T-cell (primary cell): ENCODE measurements at regions of chr19 and their contacts with region 1.

Region 1: GRCh38 chr19:10403137-10404021 is at the start of gene CDC37:
- DNase-seq: peak; percentile 92 to 99 (median 97)
- ATAC-seq: peak; percentile 81 to 84 (median 84)
- H3K4me3 ChIP-seq: peak within 1 kb of the TSS; percentile 82 to 91
- H3K4me3 Mint-ChIP-seq: peak within 1 kb of the TSS; percentile 89 to 95 (median 94)
- H3K27ac ChIP-seq: peak within 1 kb of the TSS; percentile 89
- H3K27ac Mint-ChIP-seq: peak within 1 kb of the TSS; percentile 78 to 92
- H3K4me1 ChIP-seq: peaks cover 33 to 84% of the 10 kb centered on the region in 2 experiments
- H3K4me1 Mint-ChIP-seq: peaks cover 63 to 75% (median 69%) of the 10 kb centered on the region in 3 donors
- H3K27me3 ChIP-seq: peaks cover 0 to 16% of the 10 kb centered on the region in 2 experiments
- H3K27me3 Mint-ChIP-seq: no peaks in the 10 kb centered on the region
- total RNA-seq, gene CDC37: 163 to 205 (median 190) TPM

Region 2: DNA sequence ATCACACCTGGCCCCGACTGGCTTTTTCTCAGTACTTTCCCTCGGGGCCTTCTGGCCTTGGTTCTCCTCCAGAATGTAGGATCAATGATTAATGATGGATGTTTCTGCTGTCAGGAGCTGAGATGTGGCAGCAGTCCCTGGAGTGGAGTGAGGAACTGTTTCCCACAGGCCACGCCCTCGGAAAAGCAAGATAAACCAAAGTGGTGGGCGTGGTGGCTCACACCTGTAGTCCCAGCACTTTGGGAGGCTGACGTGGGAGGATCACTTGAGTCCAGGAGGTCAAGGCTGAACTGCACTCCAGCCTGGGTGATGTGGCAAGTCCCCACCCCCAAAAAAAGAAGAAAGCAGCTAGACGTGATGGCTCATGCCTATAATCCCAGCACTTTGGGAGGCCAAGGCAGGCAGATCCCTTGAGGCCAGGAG is 324.3 kb before region 1 on chr19:
- CTCF ChIA-PET with region 1: no interaction called
- POLR2A ChIA-PET with region 1: interaction called in 1 of 2 experiments, 12 read pairs
- DNase-seq: no peak
- ATAC-seq: no peak
- H3K4me3 ChIP-seq: no peak overlapping the region
- H3K4me3 Mint-ChIP-seq: no peak overlapping the region
- H3K27ac ChIP-seq: no peak overlapping the region
- H3K27ac Mint-ChIP-seq: no peak overlapping the region
- H3K4me1 ChIP-seq: no peaks in the 10 kb centered on the region
- H3K4me1 Mint-ChIP-seq: no peaks in the 10 kb centered on the region
- H3K27me3 ChIP-seq: peaks cover 0 to 4% of the 10 kb centered on the region in 2 experiments
- H3K27me3 Mint-ChIP-seq: peaks cover 2 to 8% of the 10 kb centered on the region in 2 donors

Region 3: DNA sequence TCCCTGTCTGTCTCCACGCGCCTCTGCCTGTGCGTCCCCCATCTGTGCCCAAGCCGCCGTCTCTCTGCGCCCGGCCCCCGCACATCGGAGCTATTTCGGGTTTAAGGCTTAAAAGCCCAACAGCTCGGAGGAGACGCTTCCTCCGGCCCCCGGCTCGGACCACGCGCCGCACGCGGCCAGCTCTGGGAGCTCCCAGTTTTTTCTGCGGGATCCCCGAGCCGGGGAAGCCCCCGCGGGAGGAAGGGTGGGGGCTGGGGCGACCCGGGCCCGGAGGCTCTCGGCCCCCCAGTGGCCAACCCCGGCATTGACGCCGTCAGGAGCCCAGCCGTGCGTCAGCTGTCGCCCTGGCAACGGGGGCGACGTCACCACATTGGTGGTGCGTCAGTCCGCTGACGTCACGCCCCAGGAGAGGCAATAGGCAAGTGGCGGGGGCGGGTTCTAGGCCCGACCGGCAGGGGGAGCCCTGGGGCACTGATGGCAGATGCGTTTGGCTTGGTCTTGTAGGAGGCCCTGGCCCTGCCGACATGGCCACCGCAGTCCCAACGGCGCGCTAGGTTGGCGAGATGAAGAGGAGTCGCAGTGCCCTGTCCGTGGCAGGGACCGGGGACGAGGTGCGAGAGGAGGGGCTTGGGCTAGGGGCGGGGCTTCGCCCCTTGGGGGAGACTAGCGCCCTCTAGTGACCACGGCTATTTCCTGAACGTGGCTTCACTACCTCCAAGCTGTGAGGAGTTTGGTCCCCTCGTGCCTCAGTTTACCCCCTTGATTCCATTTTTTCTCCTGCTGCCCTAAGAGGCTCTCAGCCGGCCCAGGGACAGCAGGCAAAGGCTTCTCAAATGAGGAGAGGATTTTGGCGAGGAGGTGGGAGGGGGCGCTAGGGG is 13.2 kb after region 1 on chr19:
- CTCF ChIA-PET with region 1: interaction called, 9 to 21 read pairs
- POLR2A ChIA-PET with region 1: interaction called in 1 of 2 experiments, 4 read pairs
- DNase-seq: peak; percentile 71 to 100 (median 97)
- ATAC-seq: peak; percentile 65 to 78 (median 74)
- H3K4me3 ChIP-seq: peak overlapping the region; percentile 60 to 64
- H3K4me3 Mint-ChIP-seq: peak overlapping the region; percentile 59 to 74 (median 61)
- H3K27ac ChIP-seq: peak overlapping the region; percentile 79
- H3K27ac Mint-ChIP-seq: peak overlapping the region; percentile 66
- H3K4me1 ChIP-seq: peaks cover 18 to 79% of the 10 kb centered on the region in 2 experiments
- H3K4me1 Mint-ChIP-seq: peaks cover 44 to 60% (median 55%) of the 10 kb centered on the region in 3 donors
- H3K27me3 ChIP-seq: peaks cover 8 to 56% of the 10 kb centered on the region in 2 experiments
- H3K27me3 Mint-ChIP-seq: peaks cover 29 to 38% of the 10 kb centered on the region in 2 donors